Activated naive CD4-positive, alpha-beta T cell treated with anti-CD3 and anti-CD28 coated beads for 36 hours (primary cell): ENCODE measurements at regions of chr16 and their contacts with region 1.

Region 1: GRCh38 chr16:25838724-25839186 is 147.0 kb downstream of the HS3ST4 start:
- DNase-seq: peak; percentile 39
- H3K4me3 Mint-ChIP-seq: no peak overlapping the region
- H3K27ac Mint-ChIP-seq: no peak overlapping the region
- H3K4me1 Mint-ChIP-seq: no peaks in the 10 kb centered on the region
- H3K27me3 Mint-ChIP-seq: peaks cover 15% of the 10 kb centered on the region

Region 2: DNA sequence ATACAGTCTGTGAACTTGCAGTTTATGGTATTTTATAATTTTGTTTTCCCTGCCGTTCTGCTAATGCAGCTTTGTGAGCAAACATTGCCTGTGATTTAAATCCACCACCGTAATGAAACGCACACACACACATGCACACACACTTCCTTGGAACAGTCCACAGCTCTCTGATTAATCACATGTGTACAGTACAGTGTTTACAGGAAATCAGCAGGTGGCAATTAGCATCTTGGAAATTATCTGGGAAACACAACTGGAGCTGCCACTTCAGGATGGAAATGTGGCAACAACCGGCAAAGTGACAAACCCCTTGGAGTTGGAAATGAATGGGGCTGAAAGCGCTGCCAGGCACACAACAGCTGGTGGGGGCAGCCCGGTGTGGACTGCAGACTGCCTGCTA is 568.2 kb before region 1 on chr16:
- CTCF ChIA-PET with region 1: no interaction called
- intact Hi-C with region 1: loop called (anchors 10 kb)
- DNase-seq: no peak
- H3K4me3 Mint-ChIP-seq: no peak overlapping the region
- H3K27ac Mint-ChIP-seq: no peak overlapping the region
- H3K4me1 Mint-ChIP-seq: no peaks in the 10 kb centered on the region
- H3K27me3 Mint-ChIP-seq: no peaks in the 10 kb centered on the region

Region 3: GRCh38 chr16:25764466-25764865 is 74.3 kb before region 1 on chr16:
- CTCF ChIA-PET with region 1: no interaction called
- intact Hi-C with region 1: no loop called
- DNase-seq: no peak
- H3K4me3 Mint-ChIP-seq: no peak overlapping the region
- H3K27ac Mint-ChIP-seq: no peak overlapping the region
- H3K4me1 Mint-ChIP-seq: no peaks in the 10 kb centered on the region
- H3K27me3 Mint-ChIP-seq: peaks cover 2% of the 10 kb centered on the region

Region 4: GRCh38 chr16:25896412-25896811 is 57.7 kb after region 1 on chr16:
- CTCF ChIA-PET with region 1: no interaction called
- intact Hi-C with region 1: no loop called
- DNase-seq: no peak
- H3K4me3 Mint-ChIP-seq: no peak overlapping the region
- H3K27ac Mint-ChIP-seq: no peak overlapping the region
- H3K4me1 Mint-ChIP-seq: no peaks in the 10 kb centered on the region
- H3K27me3 Mint-ChIP-seq: peaks cover 30% of the 10 kb centered on the region

Region 5: DNA sequence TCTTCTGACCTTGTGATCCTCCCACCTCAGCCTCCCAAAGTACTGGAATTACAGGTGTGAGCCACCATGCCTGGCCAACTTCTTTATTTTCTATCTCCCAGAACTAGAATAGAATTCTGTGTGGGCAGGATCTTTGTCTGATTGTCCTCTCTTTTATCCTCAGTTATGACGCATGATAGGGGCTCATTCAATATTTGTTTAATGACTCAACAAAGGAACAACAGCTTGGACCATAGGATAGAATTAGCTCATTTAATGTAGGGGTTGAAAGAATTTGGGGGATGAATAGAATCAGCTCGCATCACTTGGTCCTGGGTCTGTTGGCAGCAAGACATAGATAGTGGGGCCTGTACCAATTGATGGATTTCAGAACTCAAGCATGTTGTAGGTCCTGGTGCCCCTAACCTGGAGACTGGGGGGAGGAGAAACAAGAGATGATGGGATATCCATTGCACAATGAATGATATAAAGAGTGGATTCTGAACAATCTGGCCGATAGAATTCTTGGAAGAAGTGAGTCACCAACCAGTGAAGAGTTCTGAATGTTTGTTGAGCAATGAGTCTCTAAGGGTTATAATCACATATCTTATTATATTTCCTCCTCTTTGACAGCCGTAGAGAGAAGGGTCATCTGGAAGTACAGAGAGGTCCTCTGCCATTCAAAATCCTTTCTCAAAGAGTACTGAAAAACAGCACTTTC is 103.2 kb after region 1 on chr16:
- CTCF ChIA-PET with region 1: no interaction called
- intact Hi-C with region 1: no loop called
- DNase-seq: no peak
- H3K4me3 Mint-ChIP-seq: no peak overlapping the region
- H3K27ac Mint-ChIP-seq: no peak overlapping the region
- H3K4me1 Mint-ChIP-seq: no peaks in the 10 kb centered on the region
- H3K27me3 Mint-ChIP-seq: peaks cover 8% of the 10 kb centered on the region

Region 6: DNA sequence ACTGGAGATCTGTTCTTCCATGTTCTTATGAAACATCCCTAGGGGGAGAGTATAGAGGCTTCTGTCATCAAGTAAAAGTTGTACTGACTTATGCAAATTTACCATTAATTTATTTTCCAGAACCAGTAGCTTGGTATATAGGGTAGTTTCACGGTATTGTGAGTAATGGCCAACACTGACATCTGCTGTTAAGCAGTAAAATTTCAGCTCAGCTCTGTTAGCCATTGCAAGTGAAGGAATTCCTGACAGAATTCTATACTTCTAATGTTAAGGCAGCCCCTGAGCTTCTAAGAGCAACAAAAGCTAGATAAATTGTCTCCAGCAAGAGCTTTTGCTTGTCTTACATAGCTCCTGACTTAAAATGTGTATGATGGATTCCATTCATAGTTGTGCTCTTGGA is 614.5 kb after region 1 on chr16:
- CTCF ChIA-PET with region 1: interaction called, 3 read pairs
- intact Hi-C with region 1: loop called (anchors 2 kb)
- DNase-seq: no peak
- H3K4me3 Mint-ChIP-seq: no peak overlapping the region
- H3K27ac Mint-ChIP-seq: no peak overlapping the region
- H3K4me1 Mint-ChIP-seq: no peaks in the 10 kb centered on the region
- H3K27me3 Mint-ChIP-seq: peaks cover 6% of the 10 kb centered on the region

Region 7: DNA sequence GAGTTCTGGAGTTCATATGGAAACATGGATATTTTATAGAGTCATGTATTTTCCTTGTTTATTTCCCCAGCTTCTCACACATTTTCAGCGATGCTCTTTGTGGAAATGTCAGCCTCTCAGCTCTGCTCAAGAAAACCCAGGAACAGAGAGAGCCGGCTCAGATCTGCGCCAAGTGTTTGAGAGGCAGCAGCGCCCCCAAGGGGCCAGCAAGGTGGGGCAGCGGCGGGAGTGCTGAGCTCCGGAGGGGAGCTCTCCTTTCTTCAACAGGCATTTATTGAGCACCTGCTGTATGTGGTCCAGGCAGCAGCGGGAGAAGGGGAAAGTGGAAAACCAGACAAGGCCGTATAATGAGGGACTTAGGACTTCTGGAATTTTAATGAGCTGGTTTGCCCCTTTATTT is 806.9 kb after region 1 on chr16:
- CTCF ChIA-PET with region 1: interaction called, 5 read pairs
- intact Hi-C with region 1: loop called (anchors 1 kb)
- DNase-seq: peak; percentile 81
- H3K4me3 Mint-ChIP-seq: no peak overlapping the region
- H3K27ac Mint-ChIP-seq: no peak overlapping the region
- H3K4me1 Mint-ChIP-seq: peaks cover 11% of the 10 kb centered on the region
- H3K27me3 Mint-ChIP-seq: peaks cover 12% of the 10 kb centered on the region

Region 8: GRCh38 chr16:26701243-26701886 is 862.6 kb after region 1 on chr16:
- CTCF ChIA-PET with region 1: no interaction called
- intact Hi-C with region 1: no loop called
- DNase-seq: no peak
- H3K4me3 Mint-ChIP-seq: no peak overlapping the region
- H3K27ac Mint-ChIP-seq: no peak overlapping the region
- H3K4me1 Mint-ChIP-seq: no peaks in the 10 kb centered on the region
- H3K27me3 Mint-ChIP-seq: peaks cover 8% of the 10 kb centered on the region

Region 9: GRCh38 chr16:26795184-26795583 is 956.4 kb after region 1 on chr16:
- CTCF ChIA-PET with region 1: no interaction called
- intact Hi-C with region 1: loop called (anchors 10 kb)
- DNase-seq: peak; percentile 39
- H3K4me3 Mint-ChIP-seq: no peak overlapping the region
- H3K27ac Mint-ChIP-seq: no peak overlapping the region
- H3K4me1 Mint-ChIP-seq: no peaks in the 10 kb centered on the region
- H3K27me3 Mint-ChIP-seq: peaks cover 31% of the 10 kb centered on the region

Region 10: GRCh38 chr16:27109666-27110523 is 1271.1 kb after region 1 on chr16:
- CTCF ChIA-PET with region 1: no interaction called
- intact Hi-C with region 1: loop called (anchors 2 kb)
- DNase-seq: peak; percentile 79
- H3K4me3 Mint-ChIP-seq: peak overlapping the region; percentile 52
- H3K27ac Mint-ChIP-seq: no peak overlapping the region
- H3K4me1 Mint-ChIP-seq: peaks cover 2% of the 10 kb centered on the region
- H3K27me3 Mint-ChIP-seq: no peaks in the 10 kb centered on the region

Region 11: DNA sequence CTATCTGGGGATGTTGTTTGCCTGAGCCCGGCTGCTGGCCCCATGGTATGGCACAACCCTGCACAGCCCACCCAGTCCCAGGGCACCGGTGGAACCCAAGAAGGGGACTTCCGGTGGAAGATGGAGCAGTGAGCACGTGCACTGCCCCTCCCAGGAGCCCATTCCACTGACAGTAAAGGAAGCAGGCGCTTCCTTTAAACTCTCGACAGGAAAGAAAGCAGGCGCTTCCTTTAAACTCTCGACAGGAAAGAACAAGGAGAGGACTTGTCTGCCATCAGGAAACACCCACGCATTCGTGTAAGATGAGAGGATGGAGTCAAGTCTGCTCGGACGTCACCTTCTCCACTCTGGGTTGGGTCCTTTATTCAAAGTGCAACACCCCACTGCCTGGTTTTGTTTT is 1616.9 kb after region 1 on chr16:
- CTCF ChIA-PET with region 1: no interaction called
- intact Hi-C with region 1: loop called (anchors 5 kb)
- DNase-seq: peak; percentile 80
- H3K4me3 Mint-ChIP-seq: no peak overlapping the region
- H3K27ac Mint-ChIP-seq: peak overlapping the region; percentile 83
- H3K4me1 Mint-ChIP-seq: peaks cover 64% of the 10 kb centered on the region
- H3K27me3 Mint-ChIP-seq: no peaks in the 10 kb centered on the region